Activated CD4-positive, alpha-beta memory T cell treated with anti-CD3 and anti-CD28 coated beads for 36 hours (primary cell): ENCODE measurements at regions of chr12 and their contacts with region 1.

Region 1: GRCh38 chr12:121522971-121523370 is 57.9 kb downstream of the KDM2B start:
- DNase-seq: no peak
- H3K4me3 Mint-ChIP-seq: no peak overlapping the region
- H3K27ac Mint-ChIP-seq: no peak overlapping the region
- H3K4me1 Mint-ChIP-seq: peaks cover 9% of the 10 kb centered on the region
- H3K27me3 Mint-ChIP-seq: no peaks in the 10 kb centered on the region

Region 2: GRCh38 chr12:121543786-121544185 is 20.8 kb after region 1 on chr12:
- CTCF ChIA-PET with region 1: no interaction called
- POLR2A ChIA-PET with region 1: no interaction called
- intact Hi-C with region 1: loop called (anchors 1 kb)
- DNase-seq: no peak
- H3K4me3 Mint-ChIP-seq: no peak overlapping the region
- H3K27ac Mint-ChIP-seq: no peak overlapping the region
- H3K4me1 Mint-ChIP-seq: peaks cover 2% of the 10 kb centered on the region
- H3K27me3 Mint-ChIP-seq: no peaks in the 10 kb centered on the region